ENCODE measurements at regions of chr1 and their contacts with region 1.

Region 1: DNA sequence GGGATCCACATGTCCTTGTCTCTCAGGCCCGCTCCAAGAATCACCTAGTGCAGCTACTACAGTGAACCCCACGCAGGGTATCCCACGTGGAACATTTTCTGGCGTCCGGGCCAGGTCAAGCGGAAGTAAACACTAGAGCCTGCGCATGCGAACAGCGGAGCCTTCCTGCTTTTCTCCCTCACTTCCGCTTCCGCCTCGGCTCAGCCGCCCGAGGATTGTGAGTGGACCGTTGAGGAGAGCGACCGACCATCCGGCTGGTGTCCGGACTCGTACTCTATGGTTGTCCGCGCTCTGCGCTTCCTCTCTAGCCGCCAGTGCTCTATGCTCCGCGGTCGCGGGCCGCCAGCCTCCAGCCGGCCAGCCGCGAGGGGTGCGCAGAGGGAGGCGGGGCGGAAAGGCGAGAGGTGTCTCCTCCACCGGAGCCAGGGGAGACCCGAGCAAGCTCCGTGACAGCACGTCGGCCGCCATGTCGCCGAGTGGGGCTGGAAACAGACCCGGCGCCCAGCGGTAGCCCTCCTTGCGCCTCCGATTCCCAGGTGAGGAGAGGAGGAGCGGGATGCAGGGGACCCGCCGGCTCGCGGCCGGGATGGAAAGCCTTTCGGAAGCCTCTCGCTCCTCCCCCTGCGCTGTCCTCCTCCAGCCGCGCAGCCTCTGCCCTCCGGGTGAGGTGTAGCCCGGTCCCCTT is at the starts of genes CNST and TFB2M:
- DNase-seq: peak; percentile 98
- H3K4me3 Mint-ChIP-seq: peak within 1 kb of the TSS; percentile 90
- H3K27ac Mint-ChIP-seq: peak within 1 kb of the TSS; percentile 91
- H3K4me1 Mint-ChIP-seq: peaks cover 42% of the 10 kb centered on the region
- H3K27me3 Mint-ChIP-seq: no peaks in the 10 kb centered on the region
- total RNA-seq, gene CNST: 25.9 TPM
- total RNA-seq, gene TFB2M: 13.6 to 14.5 TPM

Region 2: DNA sequence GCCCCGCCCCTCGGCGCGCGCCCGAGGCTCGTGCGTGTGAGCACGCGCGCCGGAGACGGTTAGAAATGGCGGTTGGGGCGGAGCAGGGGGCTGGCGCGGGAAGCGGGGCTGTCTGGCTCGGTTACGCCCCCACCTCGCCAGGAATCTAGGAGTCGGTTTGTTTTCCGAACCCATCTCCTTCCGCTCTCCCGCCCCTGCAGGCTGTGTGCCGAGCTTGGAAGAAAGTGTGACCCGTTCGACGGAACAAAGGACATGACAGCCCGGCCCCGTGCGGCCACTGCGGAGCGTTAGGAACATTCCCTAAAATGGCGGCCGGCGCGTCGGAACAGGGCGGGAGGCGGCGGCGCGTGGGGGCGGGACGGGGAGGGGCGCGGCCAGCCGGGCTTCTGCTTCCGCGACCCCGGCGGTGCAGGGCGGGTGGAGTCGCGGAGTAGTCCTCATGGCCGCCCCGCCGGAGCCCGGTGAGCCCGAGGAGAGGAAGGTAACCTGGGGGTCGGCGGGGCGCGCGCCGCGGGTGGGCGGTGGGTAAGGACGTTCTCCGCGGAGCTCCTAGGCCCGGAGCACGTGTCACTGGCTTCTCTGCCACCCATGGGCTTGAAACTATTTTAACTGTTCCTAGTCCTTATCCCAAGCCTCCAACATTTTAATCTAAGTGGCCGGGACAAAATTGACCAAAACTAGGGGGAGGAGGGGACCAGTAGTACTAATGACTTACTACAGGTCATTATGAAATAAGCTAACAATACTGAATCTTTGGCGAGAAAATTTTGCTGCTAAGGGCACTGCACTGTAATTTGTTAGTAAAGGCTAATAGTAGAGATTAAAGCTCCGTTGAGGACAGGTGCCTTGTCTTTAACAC is 1730.8 kb before region 1 on chr1 and contains the start of gene COX20:
- CTCF ChIA-PET with region 1: no interaction called
- POLR2A ChIA-PET with region 1: no interaction called
- intact Hi-C with region 1: loop called (anchors 2 kb)
- DNase-seq: peak; percentile 89
- H3K4me3 Mint-ChIP-seq: peak within 1 kb of the TSS; percentile 94
- H3K27ac Mint-ChIP-seq: peak within 1 kb of the TSS; percentile 99
- H3K4me1 Mint-ChIP-seq: peaks cover 45% of the 10 kb centered on the region
- H3K27me3 Mint-ChIP-seq: no peaks in the 10 kb centered on the region
- total RNA-seq, gene COX20: 23.4 to 27.8 TPM

Region 3: DNA sequence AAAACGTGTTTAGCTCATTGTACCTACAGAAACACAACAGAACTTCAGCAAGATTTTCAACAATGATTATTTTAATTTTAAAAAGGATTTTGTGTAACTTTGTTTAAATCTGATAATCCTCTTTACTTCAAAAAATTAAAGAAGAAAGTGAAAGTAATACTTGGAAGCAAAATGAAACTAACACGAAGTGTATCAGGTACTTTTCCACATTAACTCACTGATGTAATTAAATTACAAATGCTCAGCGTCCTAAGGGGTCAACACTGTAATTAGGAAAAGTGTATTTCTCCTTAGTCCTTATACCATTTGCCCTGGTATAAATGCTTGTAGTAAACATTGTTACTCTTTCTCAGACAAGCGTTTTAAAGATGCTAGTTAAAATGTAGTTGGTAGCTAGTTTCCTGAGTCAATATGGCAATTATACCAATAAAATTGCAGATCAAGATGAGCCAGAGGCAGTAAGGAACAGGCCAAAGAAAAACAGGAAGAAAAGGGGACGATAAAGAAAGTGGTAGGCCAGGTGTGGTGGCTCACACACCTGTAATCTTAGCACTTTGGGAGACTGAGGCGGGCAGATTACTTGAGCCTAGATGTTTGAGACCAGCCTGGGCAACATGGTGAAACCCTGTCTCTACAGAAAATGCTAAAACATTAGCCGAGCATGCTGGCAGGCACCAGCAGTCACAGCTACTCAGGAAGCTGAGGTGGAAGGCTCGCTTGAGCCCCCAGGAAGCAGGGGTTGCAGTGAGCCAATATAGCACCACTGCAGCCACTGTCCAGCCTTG is 612.2 kb before region 1 on chr1:
- CTCF ChIA-PET with region 1: no interaction called
- POLR2A ChIA-PET with region 1: no interaction called
- intact Hi-C with region 1: loop called (anchors 5 kb)
- DNase-seq: peak; percentile 15
- H3K4me3 Mint-ChIP-seq: peak overlapping the region; percentile 65
- H3K27ac Mint-ChIP-seq: peak overlapping the region; percentile 90
- H3K4me1 Mint-ChIP-seq: peaks cover 16% of the 10 kb centered on the region
- H3K27me3 Mint-ChIP-seq: no peaks in the 10 kb centered on the region

Region 4: DNA sequence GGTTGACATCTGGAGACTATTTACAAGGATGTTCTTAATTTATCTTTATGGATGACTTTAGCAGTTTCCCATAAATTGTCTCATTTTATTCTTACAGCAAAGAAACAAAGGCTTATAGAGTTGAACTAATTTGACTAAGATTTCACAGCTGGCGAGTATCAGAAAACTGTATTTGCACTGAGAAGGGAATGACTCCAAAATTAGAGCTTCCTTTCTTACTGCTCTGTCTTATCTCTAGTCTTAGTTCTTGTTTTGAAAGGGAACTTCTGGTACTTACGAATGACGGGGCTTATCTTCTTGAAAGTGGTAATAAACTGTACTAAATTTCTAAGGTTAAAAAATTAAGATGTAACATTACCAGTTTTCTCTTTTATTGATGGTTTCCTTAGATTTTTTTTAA is 13.5 kb after region 1 on chr1:
- CTCF ChIA-PET with region 1: interaction called, 4 read pairs
- POLR2A ChIA-PET with region 1: interaction called, 12 read pairs
- intact Hi-C with region 1: no loop called
- DNase-seq: no peak
- H3K4me3 Mint-ChIP-seq: no peak overlapping the region
- H3K27ac Mint-ChIP-seq: peak overlapping the region; percentile 15
- H3K4me1 Mint-ChIP-seq: peaks cover 62% of the 10 kb centered on the region
- H3K27me3 Mint-ChIP-seq: no peaks in the 10 kb centered on the region

Region 5: GRCh38 chr1:246699095-246699735 is 132.9 kb after region 1 on chr1:
- CTCF ChIA-PET with region 1: no interaction called
- POLR2A ChIA-PET with region 1: no interaction called
- intact Hi-C with region 1: loop called (anchors 2 kb)
- DNase-seq: peak; percentile 92
- H3K4me3 Mint-ChIP-seq: peak overlapping the region; percentile 49
- H3K27ac Mint-ChIP-seq: no peak overlapping the region
- H3K4me1 Mint-ChIP-seq: peaks cover 6% of the 10 kb centered on the region
- H3K27me3 Mint-ChIP-seq: no peaks in the 10 kb centered on the region

Region 6: GRCh38 chr1:247103859-247104591 is 537.8 kb after region 1 on chr1 and contains the start of gene ZNF669:
- CTCF ChIA-PET with region 1: no interaction called
- POLR2A ChIA-PET with region 1: no interaction called
- intact Hi-C with region 1: loop called (anchors 2 kb)
- DNase-seq: peak; percentile 96
- H3K4me3 Mint-ChIP-seq: peak within 1 kb of the TSS; percentile 87
- H3K27ac Mint-ChIP-seq: peak within 1 kb of the TSS; percentile 88
- H3K4me1 Mint-ChIP-seq: peaks cover 16% of the 10 kb centered on the region
- H3K27me3 Mint-ChIP-seq: peaks cover 24% of the 10 kb centered on the region
- total RNA-seq, gene ZNF669: 7.9 to 8.4 TPM

Measured in activated CD4-positive, alpha-beta memory T cell treated with anti-CD3 and anti-CD28 coated beads for 36 hours (primary cell).